ENCODE measurements at regions of chr12 and their contacts with region 1.

Region 1: GRCh38 chr12:4164559-4165558 is 108.7 kb upstream of the CCND2 start:
- DNase-seq: peak; percentile 71
- H3K4me3 Mint-ChIP-seq: peak overlapping the region; percentile 72
- H3K27ac Mint-ChIP-seq: peak overlapping the region; percentile 84
- H3K4me1 Mint-ChIP-seq: peaks cover 64% of the 10 kb centered on the region
- H3K27me3 Mint-ChIP-seq: no peaks in the 10 kb centered on the region

Region 2: DNA sequence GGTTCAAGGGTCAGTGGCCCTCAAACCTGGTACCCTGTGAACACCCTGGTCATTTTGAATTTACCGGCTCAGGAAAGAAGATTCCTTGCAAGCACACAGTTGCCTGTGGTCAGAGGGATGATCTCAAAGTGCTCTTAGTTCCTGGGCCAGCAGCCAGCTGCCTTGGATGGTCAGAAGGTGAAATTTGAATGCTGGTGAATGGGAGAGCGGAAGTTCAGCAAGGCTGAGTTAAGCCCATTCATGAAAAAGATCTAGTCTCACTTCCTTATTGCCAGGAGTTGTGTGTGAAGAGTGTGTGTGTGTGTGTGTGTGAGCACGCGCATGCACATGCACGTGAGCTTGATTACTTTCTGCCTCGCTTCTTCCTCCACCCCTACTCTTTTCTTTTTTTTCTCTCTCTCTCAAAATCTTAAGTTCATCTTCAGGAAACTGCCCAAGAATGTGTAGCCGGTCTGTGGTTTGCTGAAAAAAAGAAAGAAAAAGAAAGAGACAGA is 46.8 kb before region 1 on chr12:
- CTCF ChIA-PET with region 1: interaction called, 3 read pairs
- POLR2A ChIA-PET with region 1: interaction called, 19 read pairs
- DNase-seq: no peak
- H3K4me3 Mint-ChIP-seq: peak overlapping the region; percentile 63
- H3K27ac Mint-ChIP-seq: peak overlapping the region; percentile 90
- H3K4me1 Mint-ChIP-seq: peaks cover 72% of the 10 kb centered on the region
- H3K27me3 Mint-ChIP-seq: peaks cover 8% of the 10 kb centered on the region

Region 3: GRCh38 chr12:4141348-4142270 is 23.2 kb before region 1 on chr12:
- CTCF ChIA-PET with region 1: interaction called, 13 read pairs
- POLR2A ChIA-PET with region 1: interaction called, 63 read pairs
- DNase-seq: no peak
- H3K4me3 Mint-ChIP-seq: peak overlapping the region; percentile 76
- H3K27ac Mint-ChIP-seq: peak overlapping the region; percentile 97
- H3K4me1 Mint-ChIP-seq: peaks cover 85% of the 10 kb centered on the region
- H3K27me3 Mint-ChIP-seq: no peaks in the 10 kb centered on the region

Region 4: DNA sequence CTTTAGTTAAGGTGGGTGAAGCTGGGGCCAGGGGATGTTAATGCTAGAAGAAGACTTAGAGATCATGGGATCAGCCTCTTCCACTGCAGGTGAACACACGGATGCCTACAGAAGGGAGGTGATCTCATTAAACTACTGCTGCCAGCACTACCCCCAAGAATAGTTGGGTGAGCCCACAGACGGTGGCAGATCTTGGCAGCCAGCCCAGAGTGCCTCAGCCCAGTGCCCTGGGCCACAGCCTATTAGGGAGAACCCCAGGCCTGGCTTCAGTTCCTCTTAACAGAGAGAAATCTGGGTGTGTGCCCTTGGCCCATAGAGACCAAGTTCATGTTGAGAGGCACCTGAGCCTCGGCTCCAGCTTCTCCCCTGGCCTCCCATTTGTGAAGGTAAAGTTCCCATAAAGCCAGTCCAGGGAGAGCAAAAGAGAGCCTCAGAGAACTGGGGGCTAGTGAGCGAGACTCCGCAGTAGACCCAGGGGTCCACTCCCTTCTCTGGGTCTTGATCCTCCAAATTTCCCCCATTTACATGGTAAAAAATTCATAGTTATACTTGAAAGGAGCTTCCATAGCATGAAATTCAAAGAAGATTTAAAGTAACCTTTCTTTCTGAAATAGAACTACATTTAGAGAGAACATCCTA is 16.3 kb before region 1 on chr12:
- CTCF ChIA-PET with region 1: interaction called, 13 read pairs
- POLR2A ChIA-PET with region 1: interaction called, 80 read pairs
- DNase-seq: peak; percentile 50
- H3K4me3 Mint-ChIP-seq: no peak overlapping the region
- H3K27ac Mint-ChIP-seq: peak overlapping the region; percentile 84
- H3K4me1 Mint-ChIP-seq: peaks cover 93% of the 10 kb centered on the region
- H3K27me3 Mint-ChIP-seq: no peaks in the 10 kb centered on the region

Region 5: DNA sequence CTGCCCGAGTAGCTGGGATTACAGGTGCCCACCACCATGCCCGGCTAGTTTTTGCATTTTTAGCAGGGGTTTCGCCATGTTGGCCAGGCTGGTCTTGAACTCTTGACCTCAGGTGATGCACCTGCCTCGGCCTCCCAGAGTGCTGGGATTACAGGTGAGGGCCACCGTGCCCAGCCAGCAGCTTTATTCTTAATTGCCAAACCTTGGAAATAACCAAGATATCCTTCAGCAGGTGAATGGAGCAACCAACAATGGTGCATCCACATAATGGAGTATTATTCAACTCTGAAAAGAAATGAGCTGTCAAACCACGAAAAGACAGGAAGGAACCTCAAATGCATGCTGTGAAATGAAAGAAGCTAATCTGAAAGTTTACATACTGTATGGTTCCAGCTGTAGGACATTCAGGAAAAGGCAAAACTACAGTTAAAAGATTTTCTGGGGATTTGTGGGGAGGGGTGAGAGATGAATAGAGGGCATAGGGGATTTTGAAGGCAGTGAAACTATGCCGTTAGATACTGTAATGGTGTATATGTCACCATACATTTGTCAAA is 10.1 kb before region 1 on chr12:
- CTCF ChIA-PET with region 1: interaction called, 12 read pairs
- POLR2A ChIA-PET with region 1: interaction called, 80 read pairs
- DNase-seq: no peak
- H3K4me3 Mint-ChIP-seq: no peak overlapping the region
- H3K27ac Mint-ChIP-seq: peak overlapping the region; percentile 93
- H3K4me1 Mint-ChIP-seq: peaks cover 90% of the 10 kb centered on the region
- H3K27me3 Mint-ChIP-seq: no peaks in the 10 kb centered on the region

Region 6: DNA sequence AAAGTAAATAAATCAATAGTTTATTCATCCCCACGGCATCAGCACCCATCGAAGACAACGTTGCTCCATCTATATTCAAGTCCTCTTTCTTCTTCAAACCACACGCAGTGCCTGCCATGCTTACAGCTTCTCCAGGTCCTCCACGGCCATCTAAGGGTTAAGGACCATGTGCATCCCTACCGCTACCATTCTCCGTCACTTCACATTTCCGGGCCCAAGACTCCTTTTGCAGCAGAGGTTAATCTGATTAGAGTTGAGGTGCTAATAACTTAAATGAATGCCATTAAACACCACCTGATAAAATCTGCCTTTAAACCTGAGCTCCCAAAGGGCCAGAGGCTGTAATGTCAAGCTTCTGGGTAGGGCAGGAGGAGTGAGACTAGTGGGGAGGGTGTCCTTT is 29.0 kb after region 1 on chr12:
- CTCF ChIA-PET with region 1: no interaction called
- POLR2A ChIA-PET with region 1: no interaction called
- DNase-seq: no peak
- H3K4me3 Mint-ChIP-seq: no peak overlapping the region
- H3K27ac Mint-ChIP-seq: no peak overlapping the region
- H3K4me1 Mint-ChIP-seq: peaks cover 4% of the 10 kb centered on the region
- H3K27me3 Mint-ChIP-seq: peaks cover 5% of the 10 kb centered on the region

Region 7: GRCh38 chr12:4269279-4269991 is 104.6 kb after region 1 on chr12:
- CTCF ChIA-PET with region 1: interaction called, 6 read pairs
- POLR2A ChIA-PET with region 1: interaction called, 38 read pairs
- DNase-seq: peak; percentile 93
- H3K4me3 Mint-ChIP-seq: peak overlapping the region; percentile 97
- H3K27ac Mint-ChIP-seq: peak overlapping the region; percentile 99
- H3K4me1 Mint-ChIP-seq: peaks cover 24% of the 10 kb centered on the region
- H3K27me3 Mint-ChIP-seq: peaks cover 26% of the 10 kb centered on the region